HEK293 (cell line): ENCODE measurements at regions of chr9 and their contacts with region 1.

Region 1: GRCh38 chr9:126398403-126399058 is 71.9 kb downstream of the MVB12B start:
- H3K4me3 ChIP-seq: no peak overlapping the region
- H3K27ac ChIP-seq: no peak overlapping the region
- H3K4me1 ChIP-seq: no peaks in the 10 kb centered on the region
- CTCF ChIP-seq: peak; percentile 71

Region 2: DNA sequence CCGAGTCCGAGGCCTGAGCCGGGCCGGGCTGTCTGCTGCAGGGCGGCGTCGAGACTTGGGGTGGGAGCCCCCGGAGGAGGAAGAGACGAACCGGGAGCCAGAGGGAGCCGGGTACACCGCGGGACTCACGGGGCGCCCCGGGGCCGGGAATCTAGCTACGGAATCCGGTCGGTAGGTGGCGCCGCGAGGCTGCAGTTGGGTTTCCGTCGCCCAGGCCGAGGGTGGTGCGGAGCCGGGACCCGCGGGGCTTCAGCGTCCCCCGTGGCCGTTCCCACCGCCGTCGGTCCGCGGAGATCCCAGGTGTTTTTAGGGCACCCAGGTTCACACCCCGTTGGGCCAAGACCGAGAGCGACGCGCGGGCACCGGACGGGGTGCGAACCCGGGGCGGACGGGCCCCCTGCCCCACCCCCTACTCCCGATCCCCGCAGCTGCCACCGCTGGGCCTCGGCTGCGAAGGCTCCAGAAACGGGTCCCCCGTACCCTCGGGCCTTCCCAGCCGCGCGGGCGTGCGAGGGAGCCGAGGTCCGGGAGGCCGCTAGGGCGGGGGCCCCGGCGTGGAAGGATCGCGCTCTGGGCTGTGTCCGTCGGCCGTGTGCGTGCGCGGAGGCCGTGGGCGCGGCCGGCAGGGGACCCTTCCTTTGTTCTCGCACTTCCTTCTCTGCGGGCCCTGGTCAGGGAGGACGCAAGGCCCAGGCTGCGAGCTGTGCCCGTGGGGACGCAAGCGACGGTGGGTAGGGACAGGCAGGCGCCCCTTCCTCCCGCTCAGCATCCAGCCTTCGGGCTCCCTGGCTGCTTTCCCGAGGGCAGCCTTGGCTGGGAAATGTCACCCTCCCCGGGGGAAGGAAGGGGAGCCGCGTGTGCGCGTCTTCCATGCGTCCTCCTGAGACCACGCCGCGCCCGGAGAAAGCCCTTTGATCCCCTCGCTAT is 990.3 kb before region 1 on chr9:
- CTCF ChIA-PET with region 1: interaction called, 20 read pairs
- POLR2A ChIA-PET with region 1: no interaction called
- H3K4me3 ChIP-seq: peak overlapping the region; percentile 56
- H3K27ac ChIP-seq: peak overlapping the region; percentile 50; the same call in 1 of the 2 replicates
- H3K4me1 ChIP-seq: no peaks in the 10 kb centered on the region
- CTCF ChIP-seq: peak; percentile 90

Region 3: DNA sequence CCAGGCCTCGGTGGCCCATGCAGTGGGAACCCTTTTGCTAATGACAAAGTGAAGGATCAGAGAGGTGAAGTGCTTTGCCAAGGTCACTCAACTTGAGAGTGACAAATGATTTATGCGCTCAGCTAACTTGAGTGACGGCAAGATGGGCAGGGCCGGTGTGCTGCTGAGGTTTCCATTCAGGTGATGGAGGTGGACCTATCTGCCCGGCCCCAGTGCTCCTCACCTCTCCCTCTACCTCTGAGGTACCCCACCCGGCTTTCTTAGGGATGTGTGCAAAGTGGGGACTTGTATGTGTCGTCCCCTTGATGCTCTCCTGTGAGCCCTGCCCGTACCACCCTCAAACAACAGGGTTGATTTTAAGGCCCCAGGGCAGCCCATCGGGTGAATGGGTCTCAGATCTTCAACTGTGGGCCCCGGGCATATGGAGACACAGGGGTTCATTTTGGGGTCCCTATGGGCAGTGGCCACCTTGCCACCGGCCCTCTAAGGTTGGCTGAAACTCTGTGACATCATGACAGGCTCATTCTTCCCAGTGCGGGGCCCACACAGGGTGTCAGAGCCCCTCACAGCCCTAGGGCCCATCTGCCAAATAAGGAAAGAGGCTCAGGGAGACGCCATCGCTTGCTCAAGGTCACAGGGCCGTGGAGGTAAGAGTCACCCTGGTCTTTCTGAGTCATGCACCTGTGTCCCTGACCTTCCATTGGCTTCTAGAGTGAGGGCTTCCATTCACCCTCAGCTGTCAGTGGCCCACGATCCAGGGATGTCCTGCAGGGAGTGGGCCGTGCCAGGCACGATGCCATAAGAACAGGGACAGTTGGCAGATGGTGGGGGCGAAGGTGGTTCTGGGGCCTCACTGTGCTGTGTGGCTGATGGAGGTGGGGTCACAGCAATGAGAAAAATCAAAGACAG is 242.5 kb before region 1 on chr9:
- CTCF ChIA-PET with region 1: no interaction called
- POLR2A ChIA-PET with region 1: no interaction called
- H3K4me3 ChIP-seq: no peak overlapping the region
- H3K27ac ChIP-seq: no peak overlapping the region
- H3K4me1 ChIP-seq: no peaks in the 10 kb centered on the region
- CTCF ChIP-seq: no peak

Region 4: DNA sequence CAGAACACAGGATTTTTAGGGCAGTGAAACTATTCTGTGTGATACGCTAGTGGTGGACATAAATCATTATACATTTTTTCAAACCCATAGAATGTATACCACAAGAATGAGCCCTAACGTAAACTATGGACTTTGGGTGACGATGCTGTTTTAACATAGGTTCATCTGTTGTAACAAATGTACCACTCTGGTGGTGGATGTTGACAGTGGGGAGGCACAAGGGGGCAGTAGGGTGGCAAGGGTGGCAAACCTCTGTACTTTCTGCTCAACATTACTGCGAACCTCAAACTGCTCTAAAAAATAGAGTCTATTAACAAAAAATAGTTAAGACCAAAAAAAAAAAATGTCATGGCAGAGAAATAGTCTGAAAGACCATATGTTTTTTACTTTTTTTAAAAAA is 81.0 kb before region 1 on chr9:
- CTCF ChIA-PET with region 1: interaction called, 11 read pairs
- POLR2A ChIA-PET with region 1: no interaction called
- H3K4me3 ChIP-seq: no peak overlapping the region
- H3K27ac ChIP-seq: no peak overlapping the region
- H3K4me1 ChIP-seq: no peaks in the 10 kb centered on the region
- CTCF ChIP-seq: no peak

Region 5: GRCh38 chr9:126386088-126386487 is 12.4 kb before region 1 on chr9:
- CTCF ChIA-PET with region 1: interaction called, 27 read pairs
- POLR2A ChIA-PET with region 1: no interaction called
- H3K4me3 ChIP-seq: no peak overlapping the region
- H3K27ac ChIP-seq: no peak overlapping the region
- H3K4me1 ChIP-seq: no peaks in the 10 kb centered on the region
- CTCF ChIP-seq: no peak

Region 6: GRCh38 chr9:126425869-126426268 is 27.3 kb after region 1 on chr9:
- CTCF ChIA-PET with region 1: interaction called, 14 read pairs
- POLR2A ChIA-PET with region 1: no interaction called
- H3K4me3 ChIP-seq: no peak overlapping the region
- H3K27ac ChIP-seq: no peak overlapping the region
- H3K4me1 ChIP-seq: no peaks in the 10 kb centered on the region
- CTCF ChIP-seq: no peak

Region 7: GRCh38 chr9:126456441-126457174 is 58.1 kb after region 1 on chr9:
- CTCF ChIA-PET with region 1: no interaction called
- POLR2A ChIA-PET with region 1: no interaction called
- H3K4me3 ChIP-seq: no peak overlapping the region
- H3K27ac ChIP-seq: no peak overlapping the region
- H3K4me1 ChIP-seq: no peaks in the 10 kb centered on the region
- CTCF ChIP-seq: no peak